AG04449 (cell line): ENCODE measurements at regions of chr20 and their contacts with region 1.

Region 1: DNA sequence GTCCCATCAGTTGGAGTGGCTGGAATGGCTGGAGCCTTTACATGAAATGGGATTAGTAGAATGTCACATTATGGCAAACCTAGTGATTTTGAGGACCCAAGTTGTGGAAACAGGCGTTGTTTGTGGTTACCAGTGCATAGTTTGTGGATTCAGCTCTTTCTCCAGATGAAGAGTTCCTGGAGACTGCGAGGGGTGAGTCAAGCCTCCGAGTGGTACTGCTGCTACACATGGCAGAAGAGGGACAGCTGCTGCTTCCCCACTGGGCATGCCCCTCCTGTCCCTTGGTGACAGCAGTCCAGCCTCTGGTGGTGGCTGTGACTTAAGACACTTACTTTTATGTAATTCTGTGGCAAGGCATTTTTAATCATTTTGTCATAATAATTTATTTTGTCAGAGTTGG is 94.1 kb upstream of the SCP2D1 start:
- DNase-seq: peak; percentile 21
- H3K4me3 ChIP-seq: no peak overlapping the region
- CTCF ChIP-seq: no peak

Region 2: GRCh38 chr20:18705490-18705889 is 14.0 kb before region 1 on chr20:
- CTCF ChIA-PET with region 1: interaction called, 11 read pairs
- POLR2A ChIA-PET with region 1: interaction called, 3 read pairs
- DNase-seq: peak; percentile 93
- H3K4me3 ChIP-seq: no peak overlapping the region
- CTCF ChIP-seq: no peak

Region 3: DNA sequence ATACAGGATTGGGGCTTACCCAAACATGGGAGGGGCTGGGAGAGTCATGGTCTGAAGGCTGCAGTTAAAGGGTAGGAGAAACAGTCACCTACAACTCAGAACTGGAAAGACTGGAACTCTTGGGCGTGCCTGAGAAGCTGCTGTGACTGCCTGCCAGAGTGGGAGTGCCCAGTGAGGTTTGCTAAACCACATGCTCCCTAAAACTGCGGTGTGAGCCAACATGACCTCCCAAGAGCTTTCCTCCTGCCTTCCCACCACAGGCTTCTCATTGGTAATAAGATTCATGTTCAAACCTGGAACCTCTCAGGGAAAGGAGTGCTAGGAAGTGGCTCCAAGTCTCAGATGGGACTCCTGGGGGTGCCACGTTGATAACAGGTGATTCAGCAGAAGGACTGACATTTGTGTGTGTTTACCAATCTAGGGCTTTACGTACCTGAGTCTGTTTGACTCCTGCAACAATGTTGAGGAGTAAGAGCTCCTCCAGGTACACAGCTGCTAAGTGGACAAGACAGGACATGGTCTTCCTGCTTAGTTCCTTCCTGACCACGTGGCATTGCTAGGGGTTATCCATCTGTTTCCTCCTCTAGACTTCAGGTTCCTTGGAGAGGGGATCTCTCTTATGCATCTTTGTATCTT is 328.3 kb after region 1 on chr20:
- CTCF ChIA-PET with region 1: no interaction called
- POLR2A ChIA-PET with region 1: no interaction called
- DNase-seq: no peak
- H3K4me3 ChIP-seq: no peak overlapping the region
- CTCF ChIP-seq: no peak

Region 4: DNA sequence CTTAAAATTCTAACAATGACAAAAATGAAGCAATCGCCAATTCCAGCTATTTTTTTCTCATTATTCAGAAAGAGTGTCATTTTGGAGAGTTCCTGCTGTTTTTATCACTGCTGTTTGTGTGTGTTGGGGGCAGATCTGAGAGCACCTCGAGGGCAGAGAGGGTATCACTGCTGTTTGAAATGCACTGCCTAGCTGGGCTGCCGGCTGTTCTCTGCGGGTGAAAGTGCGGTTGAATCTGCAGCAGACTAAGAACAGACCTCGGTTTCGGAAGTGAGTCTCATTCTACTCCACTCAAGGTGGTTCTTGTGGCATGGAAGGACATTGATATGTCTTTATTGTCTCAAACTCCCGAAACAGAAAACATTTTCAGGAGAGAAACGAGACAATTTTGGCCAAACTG is 1666.7 kb after region 1 on chr20:
- CTCF ChIA-PET with region 1: no interaction called
- POLR2A ChIA-PET with region 1: no interaction called
- DNase-seq: no peak
- H3K4me3 ChIP-seq: no peak overlapping the region
- CTCF ChIP-seq: no peak